ENCODE measurements at regions of chr3 and their contacts with region 1.

Region 1: GRCh38 chr3:119279101-119279554 is 15.1 kb upstream of the ARHGAP31 start:
- DNase-seq: no peak
- CTCF ChIP-seq: no peak

Region 2: GRCh38 chr3:119257682-119258410 is 21.3 kb before region 1 on chr3:
- CTCF ChIA-PET with region 1: interaction called, 12 read pairs
- POLR2A ChIA-PET with region 1: no interaction called
- DNase-seq: no peak
- CTCF ChIP-seq: no peak

Region 3: GRCh38 chr3:119322835-119323722 is 44.0 kb after region 1 on chr3:
- CTCF ChIA-PET with region 1: no interaction called
- POLR2A ChIA-PET with region 1: no interaction called
- DNase-seq: peak; percentile 92
- CTCF ChIP-seq: no peak

Region 4: GRCh38 chr3:119352849-119353502 is 73.8 kb after region 1 on chr3:
- CTCF ChIA-PET with region 1: interaction called, 26 read pairs
- POLR2A ChIA-PET with region 1: no interaction called
- DNase-seq: no peak
- CTCF ChIP-seq: peak; percentile 31